ENCODE measurements at regions of chr11 and their contacts with region 1.

Region 1: DNA sequence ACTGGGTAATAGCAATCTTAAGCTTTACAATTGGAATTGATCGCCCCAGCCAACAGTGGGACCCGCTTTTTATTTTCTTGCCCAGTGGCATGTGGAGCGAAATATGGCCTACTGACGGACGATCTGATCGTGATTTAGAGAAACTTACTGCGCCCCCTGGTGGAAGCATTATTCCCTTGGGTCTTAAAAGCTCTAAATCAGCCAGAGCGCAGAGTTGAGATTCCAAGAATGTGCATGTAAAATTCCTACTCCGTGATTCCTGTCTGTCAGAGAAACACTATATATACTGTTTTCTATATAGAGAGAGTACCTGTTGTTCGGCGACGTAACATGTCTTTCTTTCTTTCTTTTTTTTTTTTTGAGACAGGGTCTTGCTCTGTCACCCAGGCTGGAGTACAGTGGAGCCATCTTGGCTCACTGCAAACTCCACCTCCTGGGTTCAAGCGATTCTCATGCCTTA is 3.7 kb upstream of the DPF2 start:
- DNase-seq: peak; percentile 95
- H3K4me3 ChIP-seq: no peak overlapping the region
- H3K27ac ChIP-seq: peak overlapping the region in 1 of 4 donors; percentile 2
- H3K4me1 ChIP-seq: peaks cover 0 to 18% (median 10%) of the 10 kb centered on the region in 4 donors
- H3K27me3 ChIP-seq: no peaks in the 10 kb centered on the region
- CTCF ChIP-seq: peak; percentile 65 to 87 (median 76)
- EP300 ChIP-seq: no peak
- POLR2A ChIP-seq: no peak

Region 2: DNA sequence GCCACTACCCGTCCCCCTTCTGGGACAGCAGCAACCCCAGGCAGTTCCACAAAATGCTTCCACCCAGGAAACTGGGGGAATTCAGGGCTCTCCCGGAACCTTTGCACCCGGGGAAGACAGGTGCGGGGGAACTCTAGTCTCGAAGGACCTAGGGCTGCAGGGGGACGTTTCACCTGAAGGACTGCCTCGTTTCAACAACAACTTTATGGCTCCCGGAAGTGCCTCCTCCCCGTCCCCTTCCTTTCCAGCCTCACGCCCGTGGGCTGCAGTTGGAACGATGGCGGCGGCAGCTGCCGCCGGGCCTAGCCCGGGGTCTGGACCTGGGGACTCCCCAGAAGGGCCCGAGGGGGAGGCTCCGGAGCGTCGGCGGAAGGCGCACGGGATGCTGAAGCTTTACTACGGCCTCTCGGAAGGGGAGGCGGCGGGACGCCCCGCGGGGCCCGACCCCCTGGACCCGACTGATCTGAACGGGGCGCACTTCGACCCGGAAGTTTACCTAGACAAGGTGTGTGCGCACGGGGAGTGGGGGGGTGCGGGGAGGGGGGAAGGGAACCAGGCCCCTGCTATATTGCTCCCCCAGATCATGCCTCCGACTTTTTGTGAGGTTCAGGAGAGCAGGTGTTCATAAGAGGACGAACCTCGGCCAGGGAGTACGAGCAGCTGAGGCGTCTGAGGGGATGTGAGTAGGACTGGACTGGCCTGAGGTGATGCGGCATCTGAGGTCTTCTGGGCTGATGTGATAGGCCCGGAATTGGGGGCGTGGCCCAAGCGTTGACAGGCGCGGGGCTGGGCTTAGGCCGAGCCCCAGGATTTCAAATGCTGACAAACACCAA is 233.8 kb before region 1 on chr11 and contains the start of gene VPS51:
- intact Hi-C with region 1: no loop called
- DNase-seq: peak; percentile 95
- H3K4me3 ChIP-seq: peak within 1 kb of the TSS; percentile 84 to 97 (median 91)
- H3K27ac ChIP-seq: peak within 1 kb of the TSS; percentile 90 to 95 (median 93)
- H3K4me1 ChIP-seq: peaks cover 0 to 16% (median 13%) of the 10 kb centered on the region in 4 donors
- H3K27me3 ChIP-seq: no peaks in the 10 kb centered on the region
- CTCF ChIP-seq: no peak
- EP300 ChIP-seq: peak in 2 of 4 donors; percentile 30 to 44
- POLR2A ChIP-seq: peak; percentile 35 to 41
- total RNA-seq, gene VPS51: 211 to 752 (median 281) TPM

Region 3: DNA sequence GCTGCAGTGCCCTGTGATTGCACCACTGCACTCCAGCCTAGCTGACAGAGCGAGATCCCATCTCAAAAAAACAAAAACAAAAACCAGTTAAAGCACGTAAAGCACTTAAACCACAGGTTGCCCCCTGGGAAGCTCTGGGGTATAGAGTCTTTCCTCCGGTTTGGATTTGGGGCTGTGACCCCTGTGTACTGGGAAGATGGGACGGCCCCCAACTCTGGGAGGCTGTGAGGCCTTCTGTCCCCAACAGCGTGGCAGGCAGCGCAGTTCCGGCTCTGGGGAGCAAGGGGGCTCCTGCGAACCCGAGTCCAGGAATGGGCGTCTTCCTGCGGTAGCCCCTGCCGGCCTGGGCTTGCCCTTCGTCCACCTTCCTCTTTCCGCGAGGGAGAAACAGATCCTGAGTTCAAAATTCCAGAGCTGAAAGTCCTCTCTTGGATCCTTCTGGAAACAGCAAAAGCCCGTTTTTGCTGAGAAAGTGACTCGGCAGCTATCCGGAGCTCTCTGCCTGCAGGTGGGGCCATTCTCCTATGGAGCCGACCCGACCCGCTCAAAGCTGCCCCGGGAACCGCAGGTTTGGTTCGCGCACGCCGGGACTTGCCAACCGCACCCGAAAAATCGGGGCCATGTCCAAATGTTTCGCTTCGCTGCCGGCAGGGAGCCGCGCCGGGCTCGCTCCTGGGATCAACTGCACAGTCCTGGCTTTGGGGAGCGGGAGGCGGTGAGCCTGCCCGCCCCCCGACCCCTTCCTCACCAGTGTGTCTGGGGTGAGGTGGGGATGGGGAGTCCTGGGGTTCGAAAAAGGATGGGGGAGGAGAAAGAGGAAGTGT is 104.5 kb before region 1 on chr11:
- intact Hi-C with region 1: loop called (anchors 2 kb)
- DNase-seq: peak; percentile 85
- H3K4me3 ChIP-seq: peak overlapping the region; percentile 23 to 51 (median 46)
- H3K27ac ChIP-seq: peak overlapping the region; percentile 54 to 62 (median 58)
- H3K4me1 ChIP-seq: peaks cover 0 to 17% (median 13%) of the 10 kb centered on the region in 4 donors
- H3K27me3 ChIP-seq: no peaks in the 10 kb centered on the region
- CTCF ChIP-seq: peak in 3 of 4 experiments; percentile 39 to 63 (median 43)
- EP300 ChIP-seq: no peak
- POLR2A ChIP-seq: no peak

Region 4: DNA sequence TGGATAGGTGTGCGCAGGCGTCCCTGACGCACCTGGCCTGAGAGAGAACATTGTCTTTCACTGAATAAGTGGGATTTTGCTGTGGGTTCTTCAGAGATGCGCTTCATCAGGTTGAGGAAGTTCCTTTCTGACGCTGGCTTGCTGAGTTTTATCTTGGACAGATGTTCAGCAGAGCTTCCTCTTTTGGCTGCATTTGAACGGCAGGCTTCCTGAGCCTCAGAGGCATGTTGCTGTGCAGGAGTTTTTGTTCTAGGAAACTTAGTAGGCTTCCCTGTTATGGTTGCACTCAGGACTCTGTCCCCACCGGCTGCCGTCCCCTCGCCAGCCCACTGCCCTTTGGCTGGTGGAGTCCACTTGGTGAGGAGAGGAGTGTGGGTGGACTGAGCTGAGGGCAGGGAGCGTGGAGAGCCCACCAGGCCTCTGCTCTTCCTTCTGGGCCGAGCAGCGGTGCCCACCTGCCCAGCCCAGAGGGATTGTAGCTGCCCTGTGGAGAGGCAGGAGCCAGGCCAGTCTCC is 73.7 kb after region 1 on chr11:
- intact Hi-C with region 1: no loop called
- DNase-seq: no peak
- H3K4me3 ChIP-seq: no peak overlapping the region
- H3K27ac ChIP-seq: peak overlapping the region; percentile 2 to 38 (median 24)
- H3K4me1 ChIP-seq: peaks cover 0 to 2% (median 0%) of the 10 kb centered on the region in 4 donors
- H3K27me3 ChIP-seq: no peaks in the 10 kb centered on the region
- CTCF ChIP-seq: no peak
- EP300 ChIP-seq: no peak
- POLR2A ChIP-seq: no peak